ENCODE measurements at regions of chr5 and their contacts with region 1.

Region 1: DNA sequence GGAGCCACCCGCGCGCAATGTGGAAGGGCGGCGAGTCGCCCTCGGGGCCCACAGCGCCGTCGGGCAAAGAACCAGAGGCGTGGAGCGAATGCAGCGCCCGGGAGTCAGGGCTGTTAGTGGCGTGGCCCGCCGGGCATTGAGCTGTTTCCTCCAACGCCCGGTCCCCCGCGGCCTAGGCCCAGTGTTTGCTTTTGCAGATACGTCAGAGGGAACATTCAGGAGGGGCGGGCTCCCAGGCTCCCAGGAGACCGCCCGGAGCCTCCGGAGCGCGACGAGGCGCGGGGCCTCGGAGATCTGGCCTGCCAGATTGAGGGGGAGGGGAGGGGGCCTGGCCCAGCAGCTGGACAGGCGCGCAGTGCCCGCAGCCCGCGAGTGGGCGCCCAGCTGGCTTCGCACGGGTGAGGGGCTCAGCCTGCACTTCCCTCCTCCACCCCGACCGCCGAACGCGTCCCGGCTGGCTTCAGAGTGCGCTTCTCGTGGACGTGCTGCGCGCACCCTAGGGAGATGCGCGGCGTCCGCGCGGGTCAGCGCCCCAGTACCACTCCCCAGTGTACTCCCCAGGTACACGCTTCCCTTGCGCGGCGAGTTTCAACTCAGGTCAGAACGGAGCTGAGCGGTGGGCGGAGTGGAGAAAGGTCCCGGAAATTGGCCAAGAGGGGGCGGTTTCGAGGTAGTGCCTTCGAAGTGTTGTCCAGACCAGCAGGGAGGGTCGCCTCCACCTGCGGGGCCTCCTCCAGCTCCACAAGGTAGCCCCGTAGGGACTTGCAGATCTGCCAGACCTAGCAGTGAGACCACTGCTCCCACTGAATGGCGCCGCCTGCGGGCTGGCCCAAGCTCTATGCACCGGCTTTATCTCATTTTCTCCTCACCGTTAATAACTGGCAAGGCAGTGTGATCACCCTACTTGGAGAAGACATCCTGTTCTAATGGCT is 130.4 kb downstream of the TMEM174 start:
- DNase-seq: peak; percentile 33 to 54
- ATAC-seq: peak; percentile 64 to 83
- H3K4me3 ChIP-seq: peak overlapping the region; percentile 47
- H3K27ac ChIP-seq: peak overlapping the region; percentile 59 to 86
- H3K4me1 ChIP-seq: no peaks in the 10 kb centered on the region
- CTCF ChIP-seq: peak; percentile 47
- EP300 ChIP-seq: no peak
- POLR2A ChIP-seq: no peak
- RAD21 ChIP-seq: peak; percentile 42 to 45; a peak in 4 of 5 replicates

Region 2: DNA sequence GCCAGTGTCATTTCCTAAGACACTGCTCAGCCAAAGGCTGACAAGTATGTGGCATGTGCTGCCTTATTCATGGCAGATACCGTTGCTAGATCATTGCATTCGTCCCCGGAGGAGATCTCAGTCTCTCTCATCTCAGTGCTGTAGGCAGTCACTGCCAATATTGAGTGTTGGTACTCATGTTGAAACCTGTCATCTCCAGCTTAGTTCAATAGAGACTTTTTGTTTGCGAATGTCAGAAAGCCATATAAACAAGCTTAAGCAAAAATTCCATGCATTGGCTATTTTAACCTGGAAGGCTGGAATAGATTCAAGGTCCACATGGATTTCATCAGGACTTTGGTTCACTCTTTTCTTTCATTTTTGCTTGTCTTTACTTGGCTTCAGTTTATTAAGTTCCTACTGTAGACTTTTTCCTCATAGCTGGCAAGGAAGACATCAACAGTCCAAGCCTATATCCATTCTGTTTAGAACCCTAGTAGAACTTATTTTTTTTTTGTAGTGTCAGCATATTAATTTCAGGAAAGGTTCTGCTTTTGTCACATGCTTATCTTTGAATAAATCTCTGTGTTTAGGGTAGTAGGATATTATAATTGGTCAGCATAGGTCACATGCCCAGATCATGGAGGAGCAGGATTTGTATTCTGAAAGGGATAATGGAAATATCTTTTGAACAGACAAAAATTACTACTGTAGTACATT is 280.8 kb before region 1 on chr5:
- CTCF ChIA-PET with region 1: no interaction called
- POLR2A ChIA-PET with region 1: no interaction called
- DNase-seq: no peak
- ATAC-seq: no peak
- H3K4me3 ChIP-seq: no peak overlapping the region
- H3K27ac ChIP-seq: no peak overlapping the region
- H3K4me1 ChIP-seq: no peaks in the 10 kb centered on the region
- CTCF ChIP-seq: no peak
- EP300 ChIP-seq: no peak
- POLR2A ChIP-seq: no peak
- RAD21 ChIP-seq: no peak

Region 3: DNA sequence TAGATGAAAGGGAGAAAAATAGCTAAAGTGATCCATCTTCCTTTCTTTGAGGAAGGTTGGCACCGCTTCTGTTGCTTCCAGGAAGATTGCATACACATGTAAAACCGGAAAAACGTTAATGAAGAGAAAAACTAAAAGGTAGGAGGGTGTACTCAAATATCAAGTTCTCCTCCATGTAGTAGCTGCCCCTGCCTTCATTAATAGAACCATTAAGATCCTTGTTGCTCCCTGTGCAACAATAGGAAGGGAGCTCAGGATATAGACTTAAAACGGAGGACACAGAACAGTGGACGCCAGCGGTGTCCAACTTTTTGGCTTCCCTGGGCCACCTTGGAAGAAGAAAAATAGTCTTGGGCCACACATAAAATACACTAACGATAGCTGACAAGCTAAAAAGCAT is 11.5 kb before region 1 on chr5:
- CTCF ChIA-PET with region 1: interaction called, 12 read pairs
- POLR2A ChIA-PET with region 1: no interaction called
- DNase-seq: no peak
- ATAC-seq: no peak
- H3K4me3 ChIP-seq: no peak overlapping the region
- H3K27ac ChIP-seq: no peak overlapping the region
- H3K4me1 ChIP-seq: no peaks in the 10 kb centered on the region
- CTCF ChIP-seq: no peak
- EP300 ChIP-seq: no peak
- POLR2A ChIP-seq: no peak
- RAD21 ChIP-seq: no peak

Region 4: DNA sequence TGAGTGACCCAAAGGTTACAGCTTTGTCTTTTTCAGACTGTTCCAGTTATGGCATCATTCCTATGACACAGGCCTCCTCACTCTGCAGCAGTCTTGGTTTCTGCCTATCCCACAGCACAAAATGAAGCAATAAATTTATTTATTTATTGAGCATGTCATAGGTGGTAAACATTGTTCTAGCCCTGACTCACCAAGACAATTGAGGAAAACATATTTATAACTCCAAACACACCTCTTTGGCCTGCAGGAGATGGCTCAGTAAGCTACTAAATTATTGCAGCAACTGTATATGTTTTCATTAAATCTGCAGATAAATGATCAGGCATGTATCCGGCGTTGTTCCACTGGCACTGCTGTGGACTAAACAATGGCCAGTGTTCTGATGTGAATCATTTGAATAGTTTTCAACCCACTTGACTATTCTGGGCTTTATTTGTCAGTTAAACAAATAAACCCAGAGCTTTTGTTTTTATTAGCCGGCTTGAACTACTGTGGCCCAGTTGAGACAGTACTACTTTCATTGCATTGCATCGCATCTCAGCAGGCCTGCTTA is 62.0 kb after region 1 on chr5:
- CTCF ChIA-PET with region 1: interaction called, 17 read pairs
- POLR2A ChIA-PET with region 1: no interaction called
- DNase-seq: peak; percentile 25 to 49
- ATAC-seq: peak; percentile 81 to 85
- H3K4me3 ChIP-seq: no peak overlapping the region
- H3K27ac ChIP-seq: peak overlapping the region; percentile 46 to 71; a peak in 5 of 6 replicates
- H3K4me1 ChIP-seq: peaks cover 35% of the 10 kb centered on the region
- CTCF ChIP-seq: no peak
- EP300 ChIP-seq: peak in 1 of 2 experiments; percentile 35; a peak in 1 of 5 replicates
- POLR2A ChIP-seq: no peak
- RAD21 ChIP-seq: no peak

Region 5: DNA sequence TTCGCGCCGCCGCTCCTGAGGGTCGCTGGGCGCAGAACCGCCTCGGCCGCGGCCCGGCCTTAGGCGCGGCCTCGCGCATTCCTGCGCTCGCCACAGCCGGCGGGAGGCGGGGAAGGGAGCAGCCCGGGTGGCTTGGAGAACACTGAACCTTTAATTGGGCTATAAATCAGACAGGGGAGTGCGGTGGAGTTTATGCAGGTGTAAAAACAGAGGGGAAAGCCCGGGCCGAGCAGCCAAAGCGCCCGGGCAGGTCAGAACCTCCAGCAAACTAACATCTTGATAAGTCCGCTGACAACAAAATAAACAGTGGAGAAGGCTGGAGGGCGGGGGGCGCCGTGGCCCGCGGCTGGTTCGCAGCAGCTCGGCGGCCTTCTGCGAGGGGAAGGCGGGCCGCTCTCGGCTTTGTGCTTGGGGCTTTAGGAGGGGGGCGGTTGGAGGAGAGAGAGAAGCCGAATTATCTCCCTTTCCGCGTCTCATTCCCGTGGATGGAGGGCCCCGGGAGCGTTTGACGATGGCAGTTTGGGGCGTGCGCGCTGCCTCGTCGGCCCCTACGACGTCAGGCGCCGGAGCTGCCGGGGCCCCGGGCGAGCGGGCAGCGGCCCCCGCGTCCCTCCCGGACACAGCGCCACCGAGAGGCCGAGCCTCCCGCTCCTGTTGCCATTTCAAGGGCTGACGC is 133.8 kb after region 1 on chr5:
- CTCF ChIA-PET with region 1: interaction called, 17 read pairs
- POLR2A ChIA-PET with region 1: no interaction called
- DNase-seq: peak; percentile 79 to 88
- ATAC-seq: peak; percentile 93 to 97
- H3K4me3 ChIP-seq: peak overlapping the region; percentile 45
- H3K27ac ChIP-seq: peak overlapping the region; percentile 68 to 86
- H3K4me1 ChIP-seq: peaks cover 11% of the 10 kb centered on the region
- CTCF ChIP-seq: peak; percentile 76
- EP300 ChIP-seq: no peak
- POLR2A ChIP-seq: no peak
- RAD21 ChIP-seq: peak; percentile 47 to 70; a peak in 4 of 5 replicates

Measured in A549 (cell line).